CD14-positive monocyte (primary cell): ENCODE measurements at regions of chr9 and their contacts with region 1.

Region 1: DNA sequence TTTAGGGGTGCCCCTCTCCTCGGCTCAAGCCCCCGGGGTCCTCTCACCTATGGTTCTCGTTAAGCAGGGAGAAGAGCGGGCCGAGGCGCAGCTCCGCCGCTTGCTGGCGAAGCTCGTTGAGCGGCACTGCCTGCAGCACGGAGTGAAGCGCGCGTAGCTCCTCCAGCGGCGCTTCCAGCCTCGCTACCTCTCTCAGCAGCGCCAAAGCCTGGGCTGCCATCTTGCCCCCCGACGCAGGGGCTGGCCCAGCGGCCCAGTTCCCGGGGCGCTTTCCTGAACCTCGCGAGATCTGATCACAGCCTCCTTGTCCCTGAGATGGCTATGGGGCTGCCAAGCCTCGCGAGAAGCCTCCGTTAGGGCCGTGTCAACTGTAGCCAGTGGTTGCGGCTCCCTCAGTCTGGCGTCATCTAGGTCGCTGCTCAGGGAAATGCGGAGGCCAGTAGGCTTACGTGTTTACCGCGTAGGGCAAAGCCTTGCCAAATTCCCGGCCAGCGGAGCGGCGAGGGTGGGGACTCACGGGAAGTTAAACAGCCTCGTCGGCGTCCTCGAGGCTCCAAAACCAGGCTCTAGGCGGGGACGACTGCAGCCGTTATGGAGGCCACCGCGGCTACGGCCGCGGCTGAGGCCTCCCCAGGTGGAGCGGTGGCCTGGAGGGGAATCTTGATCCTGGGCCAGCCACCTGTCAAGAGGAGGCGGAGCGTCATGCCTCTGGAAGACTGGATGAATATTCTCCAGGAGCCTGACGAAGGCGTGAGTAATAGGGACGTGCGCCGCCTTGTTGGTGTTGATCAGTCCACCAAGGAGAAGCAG is at the start of gene PSMD5:
- DNase-seq: peak; percentile 97 to 100 (median 99)
- H3K4me3 ChIP-seq: peak within 1 kb of the TSS; percentile 73 to 88 (median 78)
- H3K4me3 Mint-ChIP-seq: peak within 1 kb of the TSS; percentile 90 to 94
- H3K27ac ChIP-seq: peak within 1 kb of the TSS; percentile 92 to 94
- H3K27ac Mint-ChIP-seq: peak within 1 kb of the TSS; percentile 91 to 97 (median 95)
- H3K4me1 ChIP-seq: peaks cover 20 to 21% of the 10 kb centered on the region in 2 donors
- H3K4me1 Mint-ChIP-seq: peaks cover 26% of the 10 kb centered on the region
- H3K27me3 ChIP-seq: no peaks in the 10 kb centered on the region
- H3K27me3 Mint-ChIP-seq: peaks cover 0 to 4% (median 0%) of the 10 kb centered on the region in 3 donors
- CTCF ChIP-seq: no peak
- polyA plus RNA-seq, gene PSMD5: 10.0 to 20.9 (median 10.7) TPM

Region 2: DNA sequence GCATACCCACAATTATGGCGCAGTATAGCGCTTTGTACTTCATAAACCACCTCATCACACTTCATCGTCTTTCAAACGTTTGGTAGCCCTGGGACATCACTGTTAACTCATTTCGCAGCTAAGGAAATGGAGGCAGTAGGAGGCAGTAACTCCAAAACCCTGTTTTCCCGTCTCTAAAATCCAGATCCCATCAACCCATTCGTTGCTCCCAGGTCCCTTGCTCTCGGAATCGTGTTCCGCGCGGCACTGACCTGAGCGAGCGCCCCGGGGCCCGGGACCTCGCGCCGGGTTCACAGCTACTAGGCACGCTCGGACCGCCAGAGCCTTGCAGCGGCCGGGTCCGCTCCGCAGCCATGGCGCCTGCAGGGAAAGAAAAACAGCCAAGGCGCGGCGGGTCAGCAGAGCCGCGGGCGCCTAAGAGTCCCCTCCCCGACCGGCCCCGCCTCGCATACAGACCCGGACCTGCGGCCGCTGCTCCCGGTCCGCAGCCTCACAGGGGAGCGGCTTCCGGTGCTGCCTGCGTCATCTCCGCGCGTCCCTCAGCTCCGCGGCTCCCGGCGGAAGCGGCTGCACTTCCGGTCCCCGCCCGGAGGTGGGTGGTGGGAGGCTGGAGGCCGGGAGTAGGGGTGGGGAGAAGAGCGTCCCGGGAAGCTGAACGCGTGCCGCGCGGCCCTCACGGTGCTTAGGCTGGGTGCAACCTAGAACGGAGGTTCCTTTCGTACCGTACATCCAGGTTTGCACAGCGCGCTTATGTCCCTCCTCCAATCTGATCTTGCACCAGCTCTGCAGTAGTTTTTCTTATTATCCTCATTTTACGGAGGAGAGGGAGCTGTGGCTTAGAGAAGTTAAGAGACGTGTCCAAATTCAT is 49.8 kb before region 1 on chr9 and contains the start of gene FBXW2:
- intact Hi-C with region 1: loop called (anchors 5 to 10 kb)
- DNase-seq: peak; percentile 82 to 90 (median 83)
- H3K4me3 ChIP-seq: peak within 1 kb of the TSS; percentile 79 to 97 (median 83)
- H3K4me3 Mint-ChIP-seq: peak within 1 kb of the TSS; percentile 86 to 93
- H3K27ac ChIP-seq: peak within 1 kb of the TSS; percentile 70 to 89
- H3K27ac Mint-ChIP-seq: peak within 1 kb of the TSS; percentile 89 to 97 (median 96)
- H3K4me1 ChIP-seq: peaks cover 26 to 35% of the 10 kb centered on the region in 2 donors
- H3K4me1 Mint-ChIP-seq: peaks cover 35% of the 10 kb centered on the region
- H3K27me3 ChIP-seq: no peaks in the 10 kb centered on the region
- H3K27me3 Mint-ChIP-seq: no peaks in the 10 kb centered on the region
- CTCF ChIP-seq: no peak
- polyA plus RNA-seq, gene FBXW2: 20.0 to 30.8 (median 28.9) TPM